ENCODE measurements at regions of chr16 and their contacts with region 1.

Region 1: GRCh38 chr16:48353565-48354163 is 31.5 kb downstream of the SIAH1 start:
- DNase-seq: peak; percentile 76
- ATAC-seq: peak; percentile 81
- H3K4me3 Mint-ChIP-seq: peak overlapping the region; percentile 21
- H3K27ac Mint-ChIP-seq: peak overlapping the region; percentile 73
- H3K4me1 Mint-ChIP-seq: peaks cover 18% of the 10 kb centered on the region
- H3K27me3 Mint-ChIP-seq: no peaks in the 10 kb centered on the region
- CTCF ChIP-seq: peak; percentile 92

Region 2: DNA sequence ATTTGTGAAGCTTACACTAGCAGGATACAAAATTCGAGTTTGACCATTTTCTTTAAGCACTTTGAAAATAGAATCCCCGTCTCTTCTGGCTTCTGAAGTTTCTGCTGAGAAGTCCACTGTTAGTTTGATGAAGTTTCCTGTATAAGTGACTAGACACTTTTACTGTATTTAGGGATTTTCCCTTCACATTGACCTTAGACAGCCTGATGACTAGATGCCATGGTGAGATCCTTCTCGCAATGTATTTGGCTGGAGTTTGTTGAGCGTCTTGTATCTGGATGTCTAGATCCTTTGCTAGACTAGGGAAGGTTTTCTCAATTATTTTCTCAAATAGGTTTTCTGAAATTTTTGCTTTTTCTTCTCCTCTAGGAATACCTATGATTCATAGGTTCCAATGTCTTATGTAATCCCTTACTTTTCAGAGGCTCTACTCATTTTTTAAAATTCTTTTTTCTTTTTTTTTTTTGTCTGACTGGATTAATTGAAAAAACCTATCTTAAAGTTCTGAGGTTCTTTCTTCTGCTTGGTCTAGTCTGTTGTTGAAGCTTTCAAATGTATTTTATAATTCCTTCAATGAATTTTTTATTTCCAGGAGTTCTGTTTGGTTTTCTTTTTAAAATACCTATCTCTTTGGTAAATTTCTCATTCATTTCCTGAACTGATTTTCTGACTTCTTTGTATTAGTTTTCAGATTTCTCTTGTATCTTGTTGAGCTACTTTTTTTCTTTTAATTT is 42.6 kb before region 1 on chr16:
- CTCF ChIA-PET with region 1: no interaction called
- POLR2A ChIA-PET with region 1: no interaction called
- intact Hi-C with region 1: no loop called
- DNase-seq: no peak
- ATAC-seq: no peak
- H3K4me3 Mint-ChIP-seq: no peak overlapping the region
- H3K27ac Mint-ChIP-seq: no peak overlapping the region
- H3K4me1 Mint-ChIP-seq: peaks cover 9% of the 10 kb centered on the region
- H3K27me3 Mint-ChIP-seq: no peaks in the 10 kb centered on the region
- CTCF ChIP-seq: no peak

Region 3: GRCh38 chr16:48535831-48536613 is 182.4 kb after region 1 on chr16:
- CTCF ChIA-PET with region 1: no interaction called
- POLR2A ChIA-PET with region 1: no interaction called
- intact Hi-C with region 1: loop called (anchors 10 kb)
- DNase-seq: peak; percentile 55
- ATAC-seq: peak; percentile 60
- H3K4me3 Mint-ChIP-seq: no peak overlapping the region
- H3K27ac Mint-ChIP-seq: peak overlapping the region; percentile 58
- H3K4me1 Mint-ChIP-seq: peaks cover 19% of the 10 kb centered on the region
- H3K27me3 Mint-ChIP-seq: no peaks in the 10 kb centered on the region
- CTCF ChIP-seq: no peak

Measured in activated CD8-positive, alpha-beta T cell treated with anti-CD3 and anti-CD28 coated beads for 36 hours (primary cell).